CD4-positive, alpha-beta T cell (primary cell): ENCODE measurements at regions of chr5 and their contacts with region 1.

Region 1: GRCh38 chr5:160008877-160009590 is at the start of gene TTC1:
- DNase-seq: peak; percentile 83 to 99 (median 90)
- ATAC-seq: peak; percentile 97
- H3K4me3 ChIP-seq: peak within 1 kb of the TSS; percentile 70
- H3K4me3 Mint-ChIP-seq: peak within 1 kb of the TSS; percentile 92
- H3K27ac ChIP-seq: peak within 1 kb of the TSS; percentile 65 to 75
- H3K27ac Mint-ChIP-seq: peak within 1 kb of the TSS; percentile 92
- H3K4me1 ChIP-seq: peaks cover 18% of the 10 kb centered on the region
- H3K4me1 Mint-ChIP-seq: peaks cover 30% of the 10 kb centered on the region
- H3K27me3 ChIP-seq: no peaks in the 10 kb centered on the region
- H3K27me3 Mint-ChIP-seq: no peaks in the 10 kb centered on the region
- CTCF ChIP-seq: no peak
- total RNA-seq, gene TTC1: 15.9 to 16.3 TPM

Region 2: GRCh38 chr5:159331093-159331973 is 677.7 kb before region 1 on chr5:
- CTCF ChIA-PET with region 1: no interaction called
- POLR2A ChIA-PET with region 1: no interaction called
- intact Hi-C with region 1: loop called in 1 of 2 experiments (anchors 5 kb)
- DNase-seq: peak; percentile 64 to 86 (median 72)
- ATAC-seq: peak; percentile 95
- H3K4me3 ChIP-seq: peak overlapping the region; percentile 62
- H3K4me3 Mint-ChIP-seq: peak overlapping the region; percentile 77
- H3K27ac ChIP-seq: peak overlapping the region in 1 of 2 donors; percentile 17
- H3K27ac Mint-ChIP-seq: peak overlapping the region; percentile 39
- H3K4me1 ChIP-seq: peaks cover 21% of the 10 kb centered on the region
- H3K4me1 Mint-ChIP-seq: peaks cover 30% of the 10 kb centered on the region
- H3K27me3 ChIP-seq: peaks cover 0 to 4% of the 10 kb centered on the region in 2 experiments
- H3K27me3 Mint-ChIP-seq: no peaks in the 10 kb centered on the region
- CTCF ChIP-seq: peak; percentile 81

Region 3: GRCh38 chr5:159987031-159987674 is 21.9 kb before region 1 on chr5:
- CTCF ChIA-PET with region 1: interaction called, 7 read pairs
- POLR2A ChIA-PET with region 1: interaction called, 12 read pairs
- intact Hi-C with region 1: no loop called
- DNase-seq: peak; percentile 50 to 84 (median 70)
- ATAC-seq: peak; percentile 87
- H3K4me3 ChIP-seq: peak overlapping the region; percentile 47
- H3K4me3 Mint-ChIP-seq: peak overlapping the region; percentile 77
- H3K27ac ChIP-seq: no peak overlapping the region
- H3K27ac Mint-ChIP-seq: no peak overlapping the region
- H3K4me1 ChIP-seq: peaks cover 11% of the 10 kb centered on the region
- H3K4me1 Mint-ChIP-seq: no peaks in the 10 kb centered on the region
- H3K27me3 ChIP-seq: peaks cover 4 to 10% of the 10 kb centered on the region in 2 experiments
- H3K27me3 Mint-ChIP-seq: peaks cover 59% of the 10 kb centered on the region
- CTCF ChIP-seq: peak; percentile 69

Region 4: GRCh38 chr5:160021831-160022446 is 12.9 kb after region 1 on chr5:
- CTCF ChIA-PET with region 1: interaction called, 29 read pairs
- POLR2A ChIA-PET with region 1: interaction called, 17 read pairs
- intact Hi-C with region 1: no loop called
- DNase-seq: peak in 13 of 14 experiments; percentile 4 to 83 (median 37)
- ATAC-seq: peak; percentile 94
- H3K4me3 ChIP-seq: no peak overlapping the region
- H3K4me3 Mint-ChIP-seq: no peak overlapping the region
- H3K27ac ChIP-seq: no peak overlapping the region
- H3K27ac Mint-ChIP-seq: peak overlapping the region; percentile 35
- H3K4me1 ChIP-seq: peaks cover 10% of the 10 kb centered on the region
- H3K4me1 Mint-ChIP-seq: peaks cover 42% of the 10 kb centered on the region
- H3K27me3 ChIP-seq: no peaks in the 10 kb centered on the region
- H3K27me3 Mint-ChIP-seq: no peaks in the 10 kb centered on the region
- CTCF ChIP-seq: peak; percentile 88

Region 5: DNA sequence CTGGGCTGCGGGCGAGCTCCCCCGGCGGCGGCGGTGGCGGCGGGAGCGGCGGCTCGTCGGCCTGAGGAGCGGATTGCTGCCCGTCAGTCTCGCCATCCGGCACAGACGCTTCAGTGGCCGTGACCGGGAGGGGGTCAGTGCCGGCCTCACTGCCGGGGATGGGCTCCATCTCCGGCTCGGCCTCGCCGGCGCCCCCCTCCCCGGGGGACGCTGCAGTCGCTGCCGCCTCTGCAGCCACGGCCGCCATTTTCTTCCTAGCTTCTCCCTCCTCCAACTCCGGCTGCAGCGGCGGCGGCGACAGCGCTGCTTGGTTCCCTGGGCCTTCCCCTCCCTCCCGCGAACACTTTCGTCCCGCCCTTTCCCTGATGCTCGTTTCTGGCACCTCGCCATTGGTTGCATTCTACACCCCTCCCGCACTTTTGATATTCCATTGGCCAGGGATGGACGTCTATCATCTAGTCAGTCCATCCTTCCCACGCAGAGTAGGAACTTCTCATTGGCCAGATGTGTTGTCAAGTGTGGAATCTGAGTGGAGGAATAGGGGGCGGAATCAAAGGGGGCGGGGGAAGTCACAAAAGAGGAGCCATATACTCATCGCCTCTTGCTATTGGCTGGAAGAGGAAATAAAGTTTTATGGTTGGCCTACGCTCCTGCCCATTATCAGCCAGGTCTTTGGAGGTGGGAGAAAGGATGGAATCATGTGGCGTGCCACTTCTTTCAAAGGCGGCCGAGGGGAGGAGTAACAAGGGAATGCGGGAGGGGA is 110.3 kb after region 1 on chr5 and contains the start of gene PWWP2A:
- CTCF ChIA-PET with region 1: interaction called, 5 read pairs
- POLR2A ChIA-PET with region 1: interaction called, 9 read pairs
- intact Hi-C with region 1: loop called (anchors 2 to 5 kb)
- DNase-seq: peak; percentile 94 to 100 (median 96)
- ATAC-seq: peak; percentile 92
- H3K4me3 ChIP-seq: peak within 1 kb of the TSS; percentile 70
- H3K4me3 Mint-ChIP-seq: peak within 1 kb of the TSS; percentile 96
- H3K27ac ChIP-seq: peak within 1 kb of the TSS; percentile 68 to 87
- H3K27ac Mint-ChIP-seq: peak within 1 kb of the TSS; percentile 82
- H3K4me1 ChIP-seq: peaks cover 20% of the 10 kb centered on the region
- H3K4me1 Mint-ChIP-seq: peaks cover 20% of the 10 kb centered on the region
- H3K27me3 ChIP-seq: no peaks in the 10 kb centered on the region
- H3K27me3 Mint-ChIP-seq: peaks cover 8% of the 10 kb centered on the region
- CTCF ChIP-seq: no peak
- total RNA-seq, gene PWWP2A: 18.2 to 23.2 TPM